CD4-positive, alpha-beta T cell (primary cell): ENCODE measurements at regions of chr6 and their contacts with region 1.

Region 1: DNA sequence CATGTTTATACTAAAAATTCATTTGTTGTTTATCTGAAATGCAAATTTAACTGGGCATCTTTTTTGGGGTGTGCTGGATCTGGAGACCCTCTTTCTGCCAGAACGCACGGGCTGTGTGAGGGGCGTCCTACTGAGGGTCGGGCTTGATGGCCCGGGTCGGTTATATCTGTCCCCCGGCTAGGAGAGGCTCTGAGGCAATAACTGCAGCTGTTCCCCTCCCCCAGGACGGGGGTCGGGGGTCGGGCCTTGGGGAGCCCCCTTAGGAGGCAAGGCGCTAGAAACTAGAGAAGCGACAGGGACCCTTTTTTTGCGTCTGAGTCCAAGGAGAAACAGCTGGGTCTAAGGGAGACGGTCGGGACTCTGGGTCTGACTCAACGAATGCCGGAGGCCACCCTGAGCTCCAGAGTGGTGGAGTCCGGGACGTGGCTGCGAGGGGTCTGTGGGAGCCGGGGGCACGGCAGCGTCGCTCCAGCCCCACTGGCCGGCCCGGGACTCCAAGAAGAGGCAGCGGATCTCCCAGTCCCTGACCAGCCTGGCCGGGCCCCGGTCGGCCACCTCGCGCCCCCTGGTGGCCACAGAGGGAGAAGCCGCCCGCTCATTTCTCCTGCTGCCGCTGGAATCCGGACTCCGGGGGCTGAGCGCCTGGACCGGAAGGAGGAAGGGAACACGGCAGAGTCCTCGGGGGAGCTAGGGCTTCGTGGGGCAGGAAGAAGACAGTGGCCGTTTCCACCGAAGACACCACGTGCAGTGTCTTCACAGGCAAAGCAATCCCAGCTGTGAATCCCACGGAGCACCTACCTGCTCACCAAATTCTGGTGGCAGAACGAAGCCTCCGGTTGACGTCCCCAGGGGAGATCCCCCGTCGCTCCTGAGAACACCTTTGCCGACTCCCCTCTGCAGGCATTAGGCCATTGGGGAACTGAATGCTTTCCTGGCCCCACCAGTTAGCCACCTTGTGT is 24.0 kb upstream of the SCML4 start:
- DNase-seq: peak; percentile 66 to 88 (median 76)
- ATAC-seq: peak; percentile 80
- H3K4me3 ChIP-seq: peak overlapping the region; percentile 61
- H3K4me3 Mint-ChIP-seq: peak overlapping the region; percentile 88
- H3K27ac ChIP-seq: no peak overlapping the region
- H3K27ac Mint-ChIP-seq: peak overlapping the region; percentile 83
- H3K4me1 ChIP-seq: peaks cover 22% of the 10 kb centered on the region
- H3K4me1 Mint-ChIP-seq: peaks cover 30% of the 10 kb centered on the region
- H3K27me3 ChIP-seq: no peaks in the 10 kb centered on the region
- H3K27me3 Mint-ChIP-seq: no peaks in the 10 kb centered on the region
- CTCF ChIP-seq: peak; percentile 96

Region 2: DNA sequence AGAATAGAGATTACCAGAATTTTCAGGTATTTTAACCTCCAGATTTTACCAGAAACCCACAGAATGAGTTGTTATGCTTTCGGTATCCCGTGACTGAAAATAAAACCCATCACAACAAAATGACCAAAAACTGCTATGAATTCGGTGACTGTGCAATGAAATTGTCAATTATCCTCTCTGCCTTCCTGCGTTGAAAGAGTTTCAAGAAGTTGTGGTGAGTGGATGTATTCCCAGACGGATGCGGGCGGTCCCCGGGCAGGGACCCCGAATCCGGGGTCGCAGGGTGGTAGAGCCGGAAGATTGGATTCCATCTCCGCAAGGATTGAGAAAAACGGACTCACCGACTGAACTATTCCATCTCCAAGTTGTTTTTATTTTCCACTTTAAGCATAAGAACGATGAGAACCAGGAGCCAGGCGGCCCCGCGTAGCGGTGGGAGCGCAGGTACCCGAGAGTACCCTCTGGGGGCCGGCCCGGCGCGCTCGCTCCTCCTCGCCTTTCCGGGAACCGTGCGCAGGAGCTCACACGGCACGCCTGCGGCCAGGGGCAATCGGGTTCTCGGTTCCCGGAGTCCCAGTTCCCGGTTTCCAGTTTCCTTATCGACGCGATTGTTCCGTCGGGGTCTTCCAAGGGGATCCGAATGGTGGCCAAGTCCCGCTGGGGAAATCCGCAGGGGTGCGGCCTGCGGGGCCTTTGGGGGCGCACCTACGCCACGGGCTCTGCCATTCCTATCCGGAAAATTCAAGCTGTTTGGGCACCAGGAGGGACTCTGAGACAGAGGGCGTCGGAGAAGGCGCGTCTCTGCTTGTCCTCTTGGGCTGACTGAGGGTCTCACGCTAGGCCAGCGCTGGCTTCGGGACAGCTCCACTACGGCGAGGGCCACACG is 1866.9 kb before region 1 on chr6:
- CTCF ChIA-PET with region 1: no interaction called
- POLR2A ChIA-PET with region 1: no interaction called
- intact Hi-C with region 1: no loop called
- DNase-seq: peak in 11 of 14 experiments; percentile 15 to 61 (median 31)
- ATAC-seq: peak; percentile 85
- H3K4me3 ChIP-seq: peak overlapping the region; percentile 62
- H3K4me3 Mint-ChIP-seq: peak overlapping the region; percentile 84
- H3K27ac ChIP-seq: no peak overlapping the region
- H3K27ac Mint-ChIP-seq: no peak overlapping the region
- H3K4me1 ChIP-seq: peaks cover 20% of the 10 kb centered on the region
- H3K4me1 Mint-ChIP-seq: peaks cover 36% of the 10 kb centered on the region
- H3K27me3 ChIP-seq: peaks cover 35 to 38% of the 10 kb centered on the region in 2 experiments
- H3K27me3 Mint-ChIP-seq: peaks cover 70% of the 10 kb centered on the region
- CTCF ChIP-seq: no peak

Region 3: DNA sequence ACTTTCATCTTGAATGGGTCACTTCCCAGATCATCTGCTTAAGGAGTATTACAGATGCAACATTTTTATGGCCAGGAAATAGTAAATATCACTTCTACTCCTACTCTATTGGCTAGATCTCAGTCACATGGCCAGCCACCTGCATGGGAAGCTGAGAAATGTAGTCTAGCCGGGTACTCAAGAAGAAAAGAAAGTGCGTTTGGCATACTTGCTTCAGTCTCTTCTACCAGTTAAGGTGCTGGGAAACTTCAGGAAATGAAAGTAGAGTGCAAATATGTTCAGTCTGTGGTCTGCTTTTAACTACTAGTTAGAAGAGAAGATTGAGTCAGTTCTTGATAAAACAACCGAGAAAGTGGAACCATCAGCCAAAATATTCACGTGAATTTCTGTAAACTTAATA is 518.0 kb before region 1 on chr6:
- CTCF ChIA-PET with region 1: no interaction called
- POLR2A ChIA-PET with region 1: no interaction called
- intact Hi-C with region 1: no loop called
- DNase-seq: peak in 3 of 14 experiments; percentile 9 to 21 (median 16)
- ATAC-seq: peak; percentile 39
- H3K4me3 ChIP-seq: no peak overlapping the region
- H3K4me3 Mint-ChIP-seq: peak overlapping the region; percentile 20
- H3K27ac ChIP-seq: no peak overlapping the region
- H3K27ac Mint-ChIP-seq: peak overlapping the region; percentile 49
- H3K4me1 ChIP-seq: no peaks in the 10 kb centered on the region
- H3K4me1 Mint-ChIP-seq: peaks cover 19% of the 10 kb centered on the region
- H3K27me3 ChIP-seq: no peaks in the 10 kb centered on the region
- H3K27me3 Mint-ChIP-seq: no peaks in the 10 kb centered on the region
- CTCF ChIP-seq: no peak

Region 4: DNA sequence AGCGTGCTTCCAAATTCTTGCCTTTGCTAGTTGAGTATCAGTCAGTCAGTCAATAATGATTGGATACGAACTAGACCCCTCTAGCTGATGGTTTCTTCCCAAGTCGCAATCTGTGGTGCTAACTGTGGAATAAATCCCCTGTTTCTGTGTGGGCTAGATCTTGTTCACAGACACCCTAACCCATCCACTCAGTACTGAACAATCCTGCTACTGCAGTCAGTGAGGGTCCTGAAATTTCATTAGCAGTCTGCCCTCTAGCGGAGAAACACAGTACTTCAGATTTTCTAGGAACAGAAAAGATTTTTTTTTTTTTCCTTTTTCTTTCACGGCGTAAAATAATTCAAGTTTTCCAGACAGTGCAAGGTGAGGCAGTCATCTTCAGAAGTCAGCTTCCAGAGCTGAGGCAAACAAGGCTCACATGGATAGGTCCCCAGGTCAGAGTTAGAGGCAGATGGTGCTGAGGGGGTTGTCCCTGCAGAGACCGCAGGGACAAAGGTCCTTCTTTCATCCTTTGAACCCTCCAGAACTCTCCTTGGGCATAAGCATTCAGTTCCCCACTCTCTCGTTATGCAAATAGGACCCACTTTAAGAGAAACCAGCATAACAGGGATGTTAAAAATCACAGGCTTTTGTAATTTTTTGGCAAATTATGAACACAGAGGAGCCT is 143.6 kb before region 1 on chr6:
- CTCF ChIA-PET with region 1: interaction called, 14 read pairs
- POLR2A ChIA-PET with region 1: interaction called, 7 read pairs
- intact Hi-C with region 1: no loop called
- DNase-seq: peak in 4 of 14 experiments; percentile 39 to 69 (median 56)
- ATAC-seq: no peak
- H3K4me3 ChIP-seq: no peak overlapping the region
- H3K4me3 Mint-ChIP-seq: no peak overlapping the region
- H3K27ac ChIP-seq: no peak overlapping the region
- H3K27ac Mint-ChIP-seq: peak overlapping the region; percentile 90
- H3K4me1 ChIP-seq: peaks cover 13% of the 10 kb centered on the region
- H3K4me1 Mint-ChIP-seq: peaks cover 61% of the 10 kb centered on the region
- H3K27me3 ChIP-seq: no peaks in the 10 kb centered on the region
- H3K27me3 Mint-ChIP-seq: no peaks in the 10 kb centered on the region
- CTCF ChIP-seq: peak; percentile 86

Region 5: GRCh38 chr6:107740496-107741190 is 107.5 kb before region 1 on chr6:
- CTCF ChIA-PET with region 1: interaction called, 26 read pairs
- POLR2A ChIA-PET with region 1: interaction called, 23 read pairs
- intact Hi-C with region 1: no loop called
- DNase-seq: peak in 4 of 14 experiments; percentile 49 to 56 (median 54)
- ATAC-seq: peak; percentile 14
- H3K4me3 ChIP-seq: peak overlapping the region; percentile 46
- H3K4me3 Mint-ChIP-seq: peak overlapping the region; percentile 76
- H3K27ac ChIP-seq: peak overlapping the region; percentile 69 to 86
- H3K27ac Mint-ChIP-seq: peak overlapping the region; percentile 93
- H3K4me1 ChIP-seq: peaks cover 59% of the 10 kb centered on the region
- H3K4me1 Mint-ChIP-seq: peaks cover 87% of the 10 kb centered on the region
- H3K27me3 ChIP-seq: no peaks in the 10 kb centered on the region
- H3K27me3 Mint-ChIP-seq: no peaks in the 10 kb centered on the region
- CTCF ChIP-seq: no peak

Region 6: DNA sequence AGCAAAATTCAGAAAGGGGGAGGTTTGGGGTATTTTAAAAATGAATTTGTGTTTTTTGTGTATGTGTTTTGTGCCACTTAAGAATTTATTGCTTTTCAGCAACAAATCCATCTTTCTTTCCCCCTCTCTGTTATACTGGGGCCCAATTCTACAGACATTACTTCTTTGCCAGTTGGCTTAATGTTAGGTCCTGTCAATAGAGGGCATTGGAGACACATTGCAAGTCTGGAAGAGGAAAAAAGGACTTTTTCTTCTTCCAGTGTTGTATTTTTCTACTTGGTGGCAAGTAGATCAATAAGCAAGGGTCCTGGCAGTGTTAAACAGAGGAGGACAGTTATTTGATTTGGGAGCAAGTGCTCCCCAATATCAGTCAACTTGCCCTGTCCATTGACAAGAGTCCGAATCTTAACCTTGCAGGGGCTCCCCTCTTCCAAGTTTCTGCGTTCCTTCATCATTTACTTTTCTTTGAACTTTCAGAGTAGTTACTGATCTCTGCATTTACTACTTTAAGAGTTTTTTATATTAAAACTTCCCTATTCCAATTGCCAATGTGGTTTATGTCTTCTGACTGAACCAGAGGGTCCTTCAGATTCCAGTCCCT is 47.5 kb before region 1 on chr6:
- CTCF ChIA-PET with region 1: interaction called, 6 read pairs
- POLR2A ChIA-PET with region 1: no interaction called
- intact Hi-C with region 1: loop called (anchors 1 kb)
- DNase-seq: peak in 3 of 14 experiments; percentile 37 to 62 (median 59)
- ATAC-seq: peak; percentile 65
- H3K4me3 ChIP-seq: no peak overlapping the region
- H3K4me3 Mint-ChIP-seq: no peak overlapping the region
- H3K27ac ChIP-seq: no peak overlapping the region
- H3K27ac Mint-ChIP-seq: peak overlapping the region; percentile 92
- H3K4me1 ChIP-seq: peaks cover 15% of the 10 kb centered on the region
- H3K4me1 Mint-ChIP-seq: peaks cover 79% of the 10 kb centered on the region
- H3K27me3 ChIP-seq: no peaks in the 10 kb centered on the region
- H3K27me3 Mint-ChIP-seq: no peaks in the 10 kb centered on the region
- CTCF ChIP-seq: peak; percentile 54

Region 7: DNA sequence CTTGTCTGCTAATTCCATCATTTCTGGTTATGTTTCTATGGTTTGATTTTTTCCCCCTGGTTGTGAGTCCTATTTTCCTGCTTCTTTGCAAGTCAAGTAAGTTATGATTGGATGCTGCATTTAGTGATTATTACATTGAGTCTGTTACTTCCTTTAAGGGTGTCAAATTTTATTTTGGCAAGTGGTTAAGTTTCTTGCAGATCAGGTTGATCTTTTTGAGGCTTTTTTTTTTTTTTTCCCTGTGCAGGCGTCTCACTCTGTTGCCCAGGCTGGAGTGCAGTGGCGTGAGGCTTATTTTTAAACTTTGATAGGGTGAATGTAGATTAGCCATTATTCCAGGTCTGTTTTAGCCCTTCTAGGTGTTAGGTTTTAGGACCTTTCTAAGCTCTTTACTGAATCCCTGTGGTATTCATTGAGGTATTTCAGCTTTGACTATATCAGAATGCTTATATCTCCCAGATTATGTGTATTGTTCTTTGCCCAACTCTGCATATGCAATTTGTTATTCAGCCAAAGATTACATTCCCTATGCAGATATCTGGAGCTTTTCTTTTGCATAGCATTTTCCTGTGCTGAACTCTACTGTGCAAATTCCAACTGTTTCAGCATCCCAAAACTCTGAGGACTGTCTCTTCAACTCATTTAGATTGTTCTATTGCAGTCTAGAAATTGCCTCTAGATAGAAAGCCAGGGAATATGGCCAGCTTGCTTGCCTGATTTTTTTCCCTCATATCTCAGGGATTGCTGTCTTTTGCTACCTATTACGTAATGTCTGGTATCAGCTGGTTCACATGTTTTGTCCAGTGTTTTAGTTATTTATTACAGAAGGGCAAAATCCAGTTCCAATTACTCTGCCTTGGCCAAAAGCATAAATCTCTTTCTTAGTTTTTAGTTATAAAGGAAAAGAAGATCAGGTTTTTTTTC is 560.0 kb after region 1 on chr6:
- CTCF ChIA-PET with region 1: no interaction called
- POLR2A ChIA-PET with region 1: no interaction called
- intact Hi-C with region 1: loop called in 1 of 2 experiments (anchors 10 kb)
- DNase-seq: no peak
- ATAC-seq: no peak
- H3K4me3 ChIP-seq: no peak overlapping the region
- H3K4me3 Mint-ChIP-seq: no peak overlapping the region
- H3K27ac ChIP-seq: no peak overlapping the region
- H3K27ac Mint-ChIP-seq: no peak overlapping the region
- H3K4me1 ChIP-seq: no peaks in the 10 kb centered on the region
- H3K4me1 Mint-ChIP-seq: no peaks in the 10 kb centered on the region
- H3K27me3 ChIP-seq: no peaks in the 10 kb centered on the region
- H3K27me3 Mint-ChIP-seq: no peaks in the 10 kb centered on the region
- CTCF ChIP-seq: no peak